H1 (cell line): ENCODE measurements at regions of chr20 and their contacts with region 1.

Region 1: DNA sequence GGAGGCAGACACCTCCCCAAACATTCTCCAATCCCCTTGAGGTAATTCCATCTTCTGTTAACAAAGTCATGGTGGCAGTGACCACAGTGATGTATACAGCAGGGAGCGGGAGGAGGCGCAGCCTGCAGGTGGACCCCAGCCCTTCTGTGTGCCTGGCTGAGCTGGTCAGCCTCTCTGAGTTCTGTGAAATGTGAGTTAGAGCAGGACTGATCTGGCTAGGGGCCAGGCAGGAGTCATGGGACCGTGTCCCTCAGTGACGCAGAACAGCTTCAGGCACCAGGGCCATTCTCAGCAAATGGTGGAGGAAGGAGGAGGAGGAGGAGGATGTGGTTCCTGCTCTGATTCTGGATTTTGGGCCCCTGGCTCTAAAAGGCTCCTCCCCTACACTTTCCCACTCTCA is 6.9 kb downstream of the PHACTR3 start:
- DNase-seq: no peak
- H3K4me3 ChIP-seq: no peak overlapping the region
- H3K27ac ChIP-seq: no peak overlapping the region
- H3K4me1 ChIP-seq: no peaks in the 10 kb centered on the region
- H3K27me3 ChIP-seq: peaks cover 0 to 4% (median 0%) of the 10 kb centered on the region in 4 experiments; a peak in 1 of 7 replicates
- CTCF ChIP-seq: no peak
- EP300 ChIP-seq: no peak
- POLR2A ChIP-seq: no peak
- RAD21 ChIP-seq: no peak

Region 2: GRCh38 chr20:59598625-59599310 is 12.5 kb before region 1 on chr20:
- CTCF ChIA-PET with region 1: interaction called, 10 read pairs
- POLR2A ChIA-PET with region 1: no interaction called
- DNase-seq: peak in 1 of 2 experiments; percentile 65
- H3K4me3 ChIP-seq: no peak overlapping the region
- H3K27ac ChIP-seq: no peak overlapping the region
- H3K4me1 ChIP-seq: no peaks in the 10 kb centered on the region; a peak in 1 of 7 replicates
- H3K27me3 ChIP-seq: peaks cover 0 to 11% (median 2%) of the 10 kb centered on the region in 4 experiments; a peak in 2 of 7 replicates
- CTCF ChIP-seq: peak; percentile 78 to 93 (median 83)
- EP300 ChIP-seq: no peak
- POLR2A ChIP-seq: no peak
- RAD21 ChIP-seq: peak; percentile 76 to 78

Region 3: DNA sequence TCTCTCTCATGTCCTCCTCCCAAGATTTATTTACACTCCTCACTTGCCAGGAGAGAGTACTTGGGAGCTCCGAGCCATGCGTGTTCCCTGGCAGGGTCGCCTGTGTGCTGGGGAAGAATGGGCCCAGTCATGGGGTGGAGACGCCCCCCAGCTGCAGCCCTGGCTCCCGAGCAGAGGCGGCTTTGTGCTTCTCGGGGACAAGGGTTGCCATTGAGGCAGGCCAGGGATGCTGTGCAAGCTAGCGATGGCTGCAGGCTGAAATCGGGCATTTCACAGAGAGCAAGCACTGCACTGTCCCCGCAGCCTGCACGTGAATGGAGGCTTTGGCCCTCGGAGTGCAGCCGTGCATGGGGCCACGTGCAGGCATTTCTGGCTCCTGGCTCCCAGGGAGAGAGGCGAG is 16.9 kb after region 1 on chr20:
- CTCF ChIA-PET with region 1: no interaction called
- POLR2A ChIA-PET with region 1: no interaction called
- DNase-seq: no peak
- H3K4me3 ChIP-seq: no peak overlapping the region
- H3K27ac ChIP-seq: no peak overlapping the region
- H3K4me1 ChIP-seq: no peaks in the 10 kb centered on the region
- H3K27me3 ChIP-seq: no peaks in the 10 kb centered on the region
- CTCF ChIP-seq: no peak
- EP300 ChIP-seq: no peak
- POLR2A ChIP-seq: no peak
- RAD21 ChIP-seq: no peak